Adrenal gland (tissue), 19 donors: ENCODE measurements at regions of chr9 and their contacts with region 1.

Region 1: GRCh38 chr9:87713278-87713987 is 12.5 kb upstream of the CTSL start:
- DNase-seq: peak; percentile 51 to 92 (median 83)
- H3K4me3 ChIP-seq: no peak overlapping the region
- H3K27ac ChIP-seq: peak overlapping the region; percentile 28 to 92 (median 58)
- H3K4me1 ChIP-seq: peaks cover 6 to 34% of the 10 kb centered on the region in 2 donors
- H3K27me3 ChIP-seq: no peaks in the 10 kb centered on the region
- CTCF ChIP-seq: no peak
- POLR2A ChIP-seq: no peak

Region 2: GRCh38 chr9:86926145-86926544 is 787.3 kb before region 1 on chr9:
- intact Hi-C with region 1: no loop called
- DNase-seq: no peak
- H3K4me3 ChIP-seq: no peak overlapping the region
- H3K27ac ChIP-seq: no peak overlapping the region
- H3K4me1 ChIP-seq: no peaks in the 10 kb centered on the region
- H3K27me3 ChIP-seq: no peaks in the 10 kb centered on the region
- CTCF ChIP-seq: no peak
- POLR2A ChIP-seq: no peak

Region 3: DNA sequence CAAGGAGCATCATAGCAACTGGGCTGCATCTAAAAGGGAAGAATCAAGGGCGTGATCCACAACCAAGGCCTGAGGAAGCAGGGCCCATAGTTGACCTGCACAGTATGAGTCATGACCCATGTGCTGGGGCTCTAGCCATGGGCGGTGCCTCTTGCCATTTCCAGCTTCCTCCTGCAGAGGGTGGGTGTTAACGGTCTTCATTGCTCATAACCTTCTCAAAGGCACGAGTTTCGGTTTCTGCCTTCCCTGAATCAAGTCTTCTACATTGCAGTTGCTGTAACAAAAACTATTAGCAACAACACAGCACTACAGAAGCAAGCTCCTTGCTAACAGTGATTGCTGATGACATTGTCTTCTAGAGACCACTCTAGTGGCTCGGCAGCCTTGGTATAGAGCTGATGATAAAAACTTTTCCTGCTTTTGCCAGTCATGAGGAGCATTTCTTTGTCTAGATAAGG is 79.4 kb after region 1 on chr9:
- intact Hi-C with region 1: loop called in 1 of 2 experiments (anchors 10 kb)
- DNase-seq: peak; percentile 33 to 85 (median 61)
- H3K4me3 ChIP-seq: peak overlapping the region in 1 of 4 donors; percentile 16
- H3K27ac ChIP-seq: peak overlapping the region in 3 of 5 donors; percentile 51 to 82 (median 53)
- H3K4me1 ChIP-seq: no peaks in the 10 kb centered on the region
- H3K27me3 ChIP-seq: no peaks in the 10 kb centered on the region
- CTCF ChIP-seq: peak in 2 of 6 experiments; percentile 27 to 31
- POLR2A ChIP-seq: no peak